GM12878 (cell line): ENCODE measurements at regions of chr7 and their contacts with region 1.

Region 1: DNA sequence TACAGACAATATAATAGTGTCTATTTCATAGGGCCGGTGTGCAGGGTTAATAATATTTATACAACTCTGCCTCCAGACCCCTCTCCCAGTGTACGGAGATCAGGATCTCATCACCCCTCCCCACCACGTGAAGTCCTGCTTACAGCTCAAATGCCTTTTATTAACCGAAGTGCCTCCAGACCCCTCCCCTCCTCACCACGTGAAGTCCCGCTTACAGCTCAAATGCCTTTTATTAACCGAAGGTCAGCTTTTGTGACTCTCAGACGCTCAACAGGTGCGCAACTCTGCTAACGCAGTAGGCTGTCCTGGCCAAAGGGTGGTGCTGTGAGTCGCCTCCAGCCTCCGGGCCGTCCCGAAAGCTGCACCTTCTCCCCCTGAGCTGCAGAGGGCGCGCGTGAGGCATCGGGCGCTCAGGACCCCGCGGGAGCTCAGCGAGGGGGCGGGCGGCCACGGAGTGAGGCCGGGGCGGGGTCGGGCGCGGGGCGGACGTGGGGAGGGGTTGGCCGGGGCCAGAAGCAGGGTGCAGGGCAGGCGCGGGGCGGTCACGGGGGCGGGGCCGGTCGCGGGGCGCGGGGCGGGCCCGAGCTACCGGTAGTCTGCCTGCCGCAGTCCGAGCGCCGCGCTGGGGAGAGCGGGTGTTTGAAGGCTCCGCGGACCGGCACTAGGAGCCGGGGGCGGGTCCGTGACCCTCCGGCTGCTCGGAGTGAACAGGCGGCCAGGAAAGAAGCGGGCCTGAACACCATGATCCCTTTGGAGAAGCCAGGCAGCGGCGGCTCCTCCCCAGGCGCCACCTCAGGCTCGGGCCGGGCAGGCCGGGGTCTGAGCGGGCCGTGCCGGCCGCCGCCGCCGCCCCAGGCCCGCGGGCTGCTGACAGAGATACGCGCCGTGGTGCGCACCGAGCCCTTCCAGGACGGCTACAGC is at the start of gene STK17A:
- DNase-seq: peak; percentile 82
- ATAC-seq: peak; percentile 66
- H3K4me3 ChIP-seq: peak within 1 kb of the TSS; percentile 84
- H3K27ac ChIP-seq: peak within 1 kb of the TSS; percentile 98
- H3K4me1 ChIP-seq: peaks cover 5% of the 10 kb centered on the region
- H3K27me3 ChIP-seq: no peaks in the 10 kb centered on the region
- CTCF ChIP-seq: peak; percentile 99 to 100 (median 100); a peak in 5 of 6 replicates
- EP300 ChIP-seq: no peak
- POLR2A ChIP-seq: peak; percentile 93
- RAD21 ChIP-seq: peak; percentile 100
- polyA plus RNA-seq, gene STK17A: 18.5 to 27.6 TPM

Region 2: GRCh38 chr7:42931834-42932651 is 650.7 kb before region 1 on chr7 and contains the starts of genes MRPL32 and PSMA2:
- CTCF ChIA-PET with region 1: interaction called, 4 read pairs
- POLR2A ChIA-PET with region 1: interaction called, 5 read pairs
- RAD21 ChIA-PET with region 1: interaction called, 10 read pairs
- SMC1A ChIA-PET with region 1: interaction called, 3 read pairs
- in situ Hi-C with region 1: loop called (anchors 10 kb)
- intact Hi-C with region 1: loop called (anchors 5 kb)
- DNase-seq: peak; percentile 95
- ATAC-seq: peak; percentile 97
- H3K4me3 ChIP-seq: peak within 1 kb of the TSS; percentile 94
- H3K27ac ChIP-seq: peak within 1 kb of the TSS; percentile 86
- H3K4me1 ChIP-seq: peaks cover 15% of the 10 kb centered on the region; the same call in 1 of the 2 replicates
- H3K27me3 ChIP-seq: no peaks in the 10 kb centered on the region
- CTCF ChIP-seq: no peak
- EP300 ChIP-seq: no peak
- POLR2A ChIP-seq: peak; percentile 96
- RAD21 ChIP-seq: no peak
- polyA plus RNA-seq, gene MRPL32: 274 to 339 TPM
- polyA plus RNA-seq, gene PSMA2: 1,068 to 1,223 TPM

Region 3: DNA sequence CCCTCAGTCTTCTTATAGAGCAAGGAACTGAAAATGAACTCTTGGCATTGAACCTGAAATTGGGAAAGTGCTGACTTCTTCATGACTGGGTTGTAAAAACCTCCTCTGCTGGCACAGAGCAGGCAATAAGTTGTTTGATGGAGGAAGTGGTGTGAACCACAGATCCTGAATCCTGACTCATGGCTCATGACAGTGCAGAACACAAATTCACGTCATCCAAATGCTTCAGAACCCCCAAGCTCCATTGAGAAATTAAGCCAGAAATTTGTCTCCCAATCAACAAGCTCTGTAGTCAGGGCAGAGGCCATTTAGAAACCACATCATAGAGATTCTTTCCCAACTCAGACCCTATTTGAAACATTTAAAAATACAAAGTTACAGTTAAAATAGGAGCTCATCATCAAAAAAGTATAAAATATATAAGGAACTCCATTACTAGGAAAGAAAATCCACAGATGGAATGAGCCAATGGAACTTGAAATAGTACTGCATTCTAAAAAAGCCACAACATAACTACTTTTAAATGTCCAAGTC is 10.2 kb before region 1 on chr7:
- CTCF ChIA-PET with region 1: interaction called, 30 read pairs
- POLR2A ChIA-PET with region 1: interaction called, 8 read pairs
- RAD21 ChIA-PET with region 1: interaction called, 65 read pairs
- SMC1A ChIA-PET with region 1: interaction called, 37 read pairs
- in situ Hi-C with region 1: no loop called
- intact Hi-C with region 1: no loop called
- DNase-seq: no peak
- ATAC-seq: peak; percentile 65
- H3K4me3 ChIP-seq: no peak overlapping the region
- H3K27ac ChIP-seq: peak overlapping the region; percentile 18; the same call in 1 of the 2 replicates
- H3K4me1 ChIP-seq: peaks cover 33% of the 10 kb centered on the region
- H3K27me3 ChIP-seq: no peaks in the 10 kb centered on the region
- CTCF ChIP-seq: no peak
- EP300 ChIP-seq: no peak; a peak in 1 of 4 replicates
- POLR2A ChIP-seq: no peak
- RAD21 ChIP-seq: no peak

Region 4: GRCh38 chr7:43631559-43631958 is 48.8 kb after region 1 on chr7:
- CTCF ChIA-PET with region 1: interaction called, 22 read pairs
- POLR2A ChIA-PET with region 1: interaction called, 3 read pairs
- RAD21 ChIA-PET with region 1: interaction called, 23 read pairs
- SMC1A ChIA-PET with region 1: interaction called, 16 read pairs
- in situ Hi-C with region 1: no loop called
- intact Hi-C with region 1: no loop called
- DNase-seq: no peak
- ATAC-seq: peak; percentile 41
- H3K4me3 ChIP-seq: no peak overlapping the region
- H3K27ac ChIP-seq: 0 out of 2 replicates have a peak overlapping the region, but pooled peaks have one; percentile 21
- H3K4me1 ChIP-seq: peaks cover 10% of the 10 kb centered on the region; the same call in 1 of the 2 replicates
- H3K27me3 ChIP-seq: no peaks in the 10 kb centered on the region
- CTCF ChIP-seq: no peak
- EP300 ChIP-seq: no peak
- POLR2A ChIP-seq: no peak
- RAD21 ChIP-seq: no peak

Region 5: GRCh38 chr7:43693687-43694398 is 111.1 kb after region 1 on chr7:
- CTCF ChIA-PET with region 1: interaction called, 456 read pairs
- POLR2A ChIA-PET with region 1: interaction called, 54 read pairs
- RAD21 ChIA-PET with region 1: interaction called, 516 read pairs
- SMC1A ChIA-PET with region 1: interaction called, 307 read pairs
- in situ Hi-C with region 1: loop called (anchors 10 kb)
- intact Hi-C with region 1: no loop called
- DNase-seq: no peak
- ATAC-seq: no peak
- H3K4me3 ChIP-seq: no peak overlapping the region
- H3K27ac ChIP-seq: no peak overlapping the region
- H3K4me1 ChIP-seq: peaks cover 12% of the 10 kb centered on the region; the same call in 1 of the 2 replicates
- H3K27me3 ChIP-seq: no peaks in the 10 kb centered on the region
- CTCF ChIP-seq: no peak
- EP300 ChIP-seq: no peak
- POLR2A ChIP-seq: no peak
- RAD21 ChIP-seq: no peak

Region 6: GRCh38 chr7:43735802-43736541 is 153.2 kb after region 1 on chr7:
- CTCF ChIA-PET with region 1: interaction called, 30 read pairs
- POLR2A ChIA-PET with region 1: interaction called, 10 read pairs
- RAD21 ChIA-PET with region 1: interaction called, 47 read pairs
- SMC1A ChIA-PET with region 1: interaction called, 93 read pairs
- in situ Hi-C with region 1: no loop called
- intact Hi-C with region 1: no loop called
- DNase-seq: peak; percentile 90
- ATAC-seq: peak; percentile 90
- H3K4me3 ChIP-seq: no peak overlapping the region
- H3K27ac ChIP-seq: peak overlapping the region; percentile 58
- H3K4me1 ChIP-seq: peaks cover 31% of the 10 kb centered on the region
- H3K27me3 ChIP-seq: no peaks in the 10 kb centered on the region
- CTCF ChIP-seq: no peak
- EP300 ChIP-seq: peak; percentile 67 to 81; a peak in 3 of 4 replicates
- POLR2A ChIP-seq: no peak
- RAD21 ChIP-seq: 0 out of 2 replicates have a peak, but pooled peaks have one; percentile 1

Region 7: DNA sequence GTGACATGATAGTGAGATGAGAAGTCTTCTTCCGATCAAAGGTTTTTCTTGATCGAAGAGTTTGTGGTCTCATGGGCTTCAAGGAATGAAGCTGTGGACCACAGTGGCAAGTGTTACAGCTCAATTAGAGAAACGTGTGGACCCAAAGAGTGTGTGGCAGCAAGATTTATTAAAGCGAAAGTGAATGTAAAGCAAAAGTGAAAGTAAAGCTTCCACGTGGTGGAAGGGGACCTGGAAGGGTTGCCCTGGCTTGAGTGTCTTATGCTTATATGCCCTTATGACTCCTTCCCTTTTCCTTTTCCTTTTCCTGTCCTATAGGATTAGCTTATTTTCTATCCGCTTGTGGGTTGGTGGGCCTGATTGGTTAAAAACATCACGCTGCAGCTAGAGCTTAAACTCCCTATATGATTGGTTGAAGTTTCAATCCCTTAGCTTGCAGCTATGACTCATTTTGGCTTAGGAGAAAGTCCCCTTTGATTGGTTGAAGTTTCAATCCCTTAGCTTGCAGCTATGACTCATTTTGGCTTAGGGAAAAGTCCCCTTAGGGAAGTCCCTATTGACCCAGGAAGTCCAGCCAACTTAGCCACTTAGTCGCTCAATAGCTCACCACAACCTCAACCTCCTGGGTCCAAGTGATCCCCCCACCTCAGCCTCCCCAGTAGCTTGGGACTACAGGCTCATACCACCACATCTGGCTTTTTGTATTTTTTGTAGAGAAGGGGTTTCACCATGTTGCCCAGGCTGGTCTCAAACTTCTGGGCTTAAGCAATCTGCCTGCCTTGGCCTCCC is 251.9 kb after region 1 on chr7:
- CTCF ChIA-PET with region 1: interaction called, 214 read pairs
- POLR2A ChIA-PET with region 1: interaction called, 8 read pairs
- RAD21 ChIA-PET with region 1: interaction called, 120 read pairs
- SMC1A ChIA-PET with region 1: interaction called, 121 read pairs
- in situ Hi-C with region 1: loop called (anchors 5 kb)
- intact Hi-C with region 1: loop called (anchors 2 kb)
- DNase-seq: peak; percentile 73
- ATAC-seq: peak; percentile 81
- H3K4me3 ChIP-seq: peak overlapping the region; percentile 52
- H3K27ac ChIP-seq: peak overlapping the region; percentile 69
- H3K4me1 ChIP-seq: peaks cover 4% of the 10 kb centered on the region; the same call in 1 of the 2 replicates
- H3K27me3 ChIP-seq: no peaks in the 10 kb centered on the region
- CTCF ChIP-seq: no peak
- EP300 ChIP-seq: peak in 1 of 2 experiments; percentile 6; a peak in 1 of 4 replicates
- POLR2A ChIP-seq: no peak
- RAD21 ChIP-seq: no peak